Endothelial cell of umbilical vein (primary cell): ENCODE measurements at regions of chr2 and their contacts with region 1.

Region 1: GRCh38 chr2:216765761-216766262 is 70.5 kb upstream of the IGFBP5 start:
- DNase-seq: no peak
- H3K4me3 ChIP-seq: no peak overlapping the region
- H3K27ac ChIP-seq: no peak overlapping the region
- H3K4me1 ChIP-seq: no peaks in the 10 kb centered on the region
- H3K27me3 ChIP-seq: peaks cover 0 to 2% of the 10 kb centered on the region in 2 experiments
- CTCF ChIP-seq: no peak
- POLR2A ChIP-seq: no peak

Region 2: GRCh38 chr2:216752855-216753505 is 12.8 kb before region 1 on chr2:
- CTCF ChIA-PET with region 1: interaction called, 4 read pairs
- POLR2A ChIA-PET with region 1: no interaction called
- dilution Hi-C with region 1: no loop called
- intact Hi-C with region 1: loop called (anchors 1 kb)
- DNase-seq: peak; percentile 50
- H3K4me3 ChIP-seq: no peak overlapping the region
- H3K27ac ChIP-seq: no peak overlapping the region
- H3K4me1 ChIP-seq: no peaks in the 10 kb centered on the region
- H3K27me3 ChIP-seq: peaks cover 0 to 4% of the 10 kb centered on the region in 2 experiments
- CTCF ChIP-seq: no peak
- POLR2A ChIP-seq: no peak